CD14-positive monocyte (primary cell): ENCODE measurements at regions of chr6 and their contacts with region 1.

Region 1: GRCh38 chr6:37783856-37784584 is 35.5 kb upstream of the ZFAND3 start:
- DNase-seq: peak in 1 of 3 donors; percentile 6
- H3K4me3 ChIP-seq: peak overlapping the region in 2 of 3 experiments; percentile 17 to 60
- H3K4me3 Mint-ChIP-seq: peak overlapping the region; percentile 64 to 87
- H3K27ac ChIP-seq: no peak overlapping the region
- H3K27ac Mint-ChIP-seq: peak overlapping the region in 1 of 7 donors; percentile 31
- H3K4me1 ChIP-seq: peaks cover 10 to 16% of the 10 kb centered on the region in 2 donors
- H3K4me1 Mint-ChIP-seq: peaks cover 17% of the 10 kb centered on the region
- H3K27me3 ChIP-seq: peaks cover 22 to 41% of the 10 kb centered on the region in 2 donors
- H3K27me3 Mint-ChIP-seq: peaks cover 45 to 59% (median 47%) of the 10 kb centered on the region in 3 donors
- CTCF ChIP-seq: no peak

Region 2: DNA sequence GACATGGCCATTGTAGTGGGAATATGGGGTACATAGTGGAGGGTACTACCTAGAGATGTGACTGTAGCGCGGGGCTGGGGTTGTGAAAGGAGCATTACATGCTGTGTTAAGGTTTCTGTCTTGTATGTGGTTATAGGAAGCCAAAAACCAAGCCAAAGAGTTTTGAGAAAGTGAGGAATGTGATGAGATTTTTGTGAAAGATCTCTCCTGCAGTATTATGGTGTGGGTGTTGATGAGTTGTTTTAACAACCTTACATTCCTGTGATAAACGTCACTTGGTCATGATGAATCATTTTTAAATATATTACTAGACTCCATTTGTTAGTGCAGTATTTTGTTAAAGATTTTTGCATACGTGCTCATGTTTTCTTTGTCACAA is 84.4 kb after region 1 on chr6:
- intact Hi-C with region 1: loop called in 1 of 2 experiments (anchors 5 kb)
- DNase-seq: no peak
- H3K4me3 ChIP-seq: no peak overlapping the region
- H3K4me3 Mint-ChIP-seq: no peak overlapping the region
- H3K27ac ChIP-seq: peak overlapping the region in 1 of 2 donors; percentile 58
- H3K27ac Mint-ChIP-seq: peak overlapping the region; percentile 14 to 85 (median 74)
- H3K4me1 ChIP-seq: peaks cover 48 to 61% of the 10 kb centered on the region in 2 donors
- H3K4me1 Mint-ChIP-seq: peaks cover 67% of the 10 kb centered on the region
- H3K27me3 ChIP-seq: no peaks in the 10 kb centered on the region
- H3K27me3 Mint-ChIP-seq: peaks cover 0 to 1% (median 0%) of the 10 kb centered on the region in 3 donors
- CTCF ChIP-seq: no peak